PC-3 (cell line): ENCODE measurements at regions of chr1 and their contacts with region 1.

Region 1: DNA sequence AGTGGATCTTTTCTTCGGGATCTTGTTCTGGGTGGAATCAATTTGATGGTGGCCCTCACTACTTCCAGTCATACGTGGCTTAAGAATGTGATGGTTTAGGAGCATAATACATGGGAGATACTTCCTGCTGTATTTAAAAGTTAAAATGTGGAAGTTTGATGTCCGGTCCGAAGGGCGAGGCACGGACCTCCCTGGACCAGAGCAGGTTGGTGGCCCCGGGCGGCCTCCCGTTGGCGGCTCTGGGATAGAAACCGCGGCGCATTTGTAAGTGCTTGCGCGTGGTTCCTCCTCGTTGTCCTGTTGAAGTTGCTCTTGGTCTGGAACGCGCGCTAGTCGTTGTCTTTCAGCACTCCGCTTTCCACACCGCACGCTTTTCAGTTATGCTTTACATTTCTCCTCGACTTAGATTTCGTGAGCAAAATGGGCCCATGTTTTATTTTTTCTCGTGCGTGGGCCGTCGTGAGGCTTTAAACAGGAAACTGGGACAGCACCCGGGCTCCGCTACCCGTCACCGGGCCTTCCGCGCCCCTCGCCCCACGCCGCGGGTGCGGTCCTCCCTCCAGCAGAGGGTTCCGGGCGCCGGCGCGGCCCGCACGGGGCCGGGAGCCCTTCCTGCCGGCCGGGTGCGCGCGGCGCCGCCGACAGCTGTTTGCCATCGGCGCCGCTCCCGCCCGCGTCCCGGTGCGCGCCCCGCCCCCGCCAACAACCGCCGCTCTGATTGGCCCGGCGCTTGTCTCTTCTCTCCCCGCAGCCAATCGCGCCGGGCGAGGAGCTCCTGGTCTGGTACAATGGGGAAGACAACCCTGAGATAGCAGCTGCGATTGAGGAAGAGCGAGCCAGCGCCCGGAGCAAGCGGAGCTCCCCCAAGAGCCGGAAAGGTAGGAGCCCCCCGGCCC is 48.9 kb downstream of the PRDM2 start:
- DNase-seq: peak; percentile 94
- ATAC-seq: peak; percentile 90
- H3K4me3 ChIP-seq: peak overlapping the region; percentile 86
- H3K27ac ChIP-seq: peak overlapping the region; percentile 51
- H3K4me1 ChIP-seq: peaks cover 24% of the 10 kb centered on the region
- H3K27me3 ChIP-seq: no peaks in the 10 kb centered on the region
- CTCF ChIP-seq: 0 out of 2 replicates have a peak, but pooled peaks have one; percentile 18

Region 2: DNA sequence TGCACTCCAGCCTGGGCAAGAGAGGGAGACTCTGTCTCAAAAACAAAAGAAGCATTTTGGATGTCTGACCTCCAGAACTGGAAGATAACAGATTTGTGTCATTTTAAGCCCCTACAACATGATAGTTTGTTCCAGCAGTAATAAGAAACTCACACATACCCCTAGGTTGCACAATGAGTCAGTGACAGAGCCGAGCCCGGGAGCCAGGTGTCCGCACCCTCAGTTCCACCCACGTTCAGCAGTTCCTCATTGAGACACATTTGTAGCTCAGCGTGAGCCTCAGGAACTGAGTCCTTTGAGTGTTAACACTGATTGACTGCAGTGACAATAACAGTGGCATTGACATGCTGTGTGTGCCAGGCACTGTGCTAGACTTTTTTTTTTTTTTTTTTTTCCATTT is 254.8 kb before region 1 on chr1:
- CTCF ChIA-PET with region 1: no interaction called
- POLR2A ChIA-PET with region 1: no interaction called
- intact Hi-C with region 1: no loop called
- DNase-seq: no peak
- ATAC-seq: no peak
- H3K4me3 ChIP-seq: no peak overlapping the region
- H3K27ac ChIP-seq: no peak overlapping the region
- H3K4me1 ChIP-seq: no peaks in the 10 kb centered on the region
- H3K27me3 ChIP-seq: peaks cover 48% of the 10 kb centered on the region
- CTCF ChIP-seq: no peak

Region 3: GRCh38 chr1:13708380-13708982 is 40.4 kb before region 1 on chr1:
- CTCF ChIA-PET with region 1: no interaction called
- POLR2A ChIA-PET with region 1: no interaction called
- intact Hi-C with region 1: no loop called
- DNase-seq: no peak
- ATAC-seq: no peak
- H3K4me3 ChIP-seq: no peak overlapping the region
- H3K27ac ChIP-seq: no peak overlapping the region
- H3K4me1 ChIP-seq: no peaks in the 10 kb centered on the region
- H3K27me3 ChIP-seq: no peaks in the 10 kb centered on the region
- CTCF ChIP-seq: no peak

Region 4: DNA sequence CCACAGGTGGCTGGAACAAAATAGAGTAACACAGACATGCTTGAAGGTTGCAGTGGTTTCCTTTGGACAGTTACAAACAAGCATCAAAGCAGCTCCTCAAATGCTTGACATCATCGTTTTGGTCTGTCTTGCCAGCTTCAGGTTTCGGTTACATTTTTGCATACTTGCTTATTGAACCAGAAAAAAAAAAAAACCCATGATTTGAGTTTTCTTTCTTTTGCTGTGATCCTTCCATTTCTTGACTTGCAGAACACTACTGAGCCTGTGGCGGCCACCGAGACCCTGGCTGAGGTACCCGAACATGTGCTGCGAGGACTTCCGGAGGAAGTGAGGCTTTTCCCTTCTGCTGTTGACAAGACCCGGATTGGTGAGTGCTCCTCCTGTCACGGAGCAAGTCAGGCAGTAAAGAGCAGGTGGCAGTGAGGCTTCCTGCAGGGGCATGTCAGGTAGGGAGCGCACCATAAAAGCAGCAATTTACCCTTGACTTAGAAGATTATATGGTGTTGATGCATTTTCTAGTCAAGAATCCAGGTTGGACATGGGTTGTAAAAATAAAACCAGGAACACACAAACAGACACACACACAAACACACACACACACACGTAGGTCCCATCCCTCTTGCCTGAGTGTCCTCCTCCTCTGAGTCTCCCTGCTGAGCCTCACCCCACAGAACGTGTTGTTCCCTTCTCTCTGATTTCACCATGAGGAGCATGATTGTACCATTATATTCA is 17.9 kb before region 1 on chr1:
- CTCF ChIA-PET with region 1: interaction called, 4 read pairs
- POLR2A ChIA-PET with region 1: interaction called, 11 read pairs
- intact Hi-C with region 1: no loop called
- DNase-seq: no peak
- ATAC-seq: no peak
- H3K4me3 ChIP-seq: no peak overlapping the region
- H3K27ac ChIP-seq: no peak overlapping the region
- H3K4me1 ChIP-seq: no peaks in the 10 kb centered on the region
- H3K27me3 ChIP-seq: no peaks in the 10 kb centered on the region
- CTCF ChIP-seq: no peak

Region 5: GRCh38 chr1:13759088-13759487 is 10.2 kb after region 1 on chr1:
- CTCF ChIA-PET with region 1: interaction called, 6 read pairs
- POLR2A ChIA-PET with region 1: interaction called, 21 read pairs
- intact Hi-C with region 1: no loop called
- DNase-seq: peak; percentile 95
- ATAC-seq: peak; percentile 51
- H3K4me3 ChIP-seq: peak overlapping the region; percentile 41; the same call in 1 of the 2 replicates
- H3K27ac ChIP-seq: peak overlapping the region; percentile 29
- H3K4me1 ChIP-seq: peaks cover 50% of the 10 kb centered on the region
- H3K27me3 ChIP-seq: no peaks in the 10 kb centered on the region
- CTCF ChIP-seq: peak; percentile 45

Region 6: DNA sequence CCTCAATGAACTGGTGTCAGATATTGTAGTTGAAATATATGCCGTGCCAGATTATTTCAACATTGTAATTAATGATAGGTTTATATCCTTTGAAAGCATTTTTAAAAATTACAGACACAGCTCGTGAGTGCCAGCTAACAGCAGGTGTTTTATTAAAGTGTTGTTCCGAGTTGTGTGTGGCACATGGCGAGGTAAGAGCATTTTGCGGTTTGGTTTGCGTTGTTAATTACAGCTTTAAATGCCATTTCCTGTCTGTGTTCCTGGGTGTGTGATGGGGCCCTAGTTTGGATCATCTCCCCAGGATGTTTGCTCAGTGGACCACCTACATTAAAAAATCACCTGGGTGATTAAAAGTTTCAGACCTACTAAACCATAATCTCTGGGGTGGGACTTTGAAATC is 48.5 kb after region 1 on chr1:
- CTCF ChIA-PET with region 1: interaction called, 3 read pairs
- POLR2A ChIA-PET with region 1: no interaction called
- intact Hi-C with region 1: loop called (anchors 5 kb)
- DNase-seq: no peak
- ATAC-seq: no peak
- H3K4me3 ChIP-seq: no peak overlapping the region
- H3K27ac ChIP-seq: no peak overlapping the region
- H3K4me1 ChIP-seq: peaks cover 22% of the 10 kb centered on the region
- H3K27me3 ChIP-seq: no peaks in the 10 kb centered on the region
- CTCF ChIP-seq: no peak

Region 7: DNA sequence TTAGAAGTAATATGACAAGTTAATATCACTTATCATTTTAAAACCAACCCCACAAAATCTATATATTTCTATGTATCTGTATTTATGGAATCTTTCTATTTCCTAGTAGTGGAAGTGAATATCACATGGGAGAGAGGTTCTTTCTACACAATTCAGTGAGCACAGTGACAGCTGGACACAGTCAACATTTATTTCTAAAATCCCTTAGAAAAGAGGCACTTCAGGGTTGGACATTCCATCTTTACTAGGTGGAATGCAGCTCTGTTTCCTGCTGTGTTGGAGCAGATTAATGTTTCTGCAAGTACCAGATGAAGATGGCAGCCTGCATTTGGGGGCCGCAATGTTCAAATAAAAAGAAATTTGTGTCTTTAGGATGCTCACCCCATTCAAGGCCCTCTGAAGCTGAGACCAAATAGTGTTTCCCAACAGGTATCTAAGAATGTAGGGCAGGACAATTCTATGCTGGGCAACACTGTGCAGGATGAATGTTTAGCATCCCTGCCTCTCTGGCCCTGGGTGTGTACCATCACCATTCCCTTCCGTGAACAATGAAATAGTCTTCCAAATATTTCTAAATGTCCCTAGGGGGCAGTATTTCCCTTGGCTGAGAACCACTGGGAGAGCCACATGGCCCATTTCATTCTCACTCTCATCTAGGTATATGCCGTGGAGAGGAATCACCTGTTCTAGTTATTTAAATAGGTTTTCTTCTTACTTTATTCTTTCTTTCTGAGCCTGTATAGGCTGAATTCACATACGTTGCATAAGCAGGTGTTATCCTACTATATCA is 345.9 kb after region 1 on chr1:
- CTCF ChIA-PET with region 1: no interaction called
- POLR2A ChIA-PET with region 1: no interaction called
- intact Hi-C with region 1: no loop called
- DNase-seq: peak; percentile 63
- ATAC-seq: peak; percentile 40; the same call in 1 of the 2 replicates
- H3K4me3 ChIP-seq: no peak overlapping the region
- H3K27ac ChIP-seq: no peak overlapping the region
- H3K4me1 ChIP-seq: no peaks in the 10 kb centered on the region
- H3K27me3 ChIP-seq: no peaks in the 10 kb centered on the region
- CTCF ChIP-seq: peak; percentile 72